PC-9 (cell line): ENCODE measurements at regions of chr7 and their contacts with region 1.

Region 1: GRCh38 chr7:135977007-135977741 is at the start of gene MTPN:
- DNase-seq: peak; percentile 96 to 99
- H3K4me3 ChIP-seq: peak within 1 kb of the TSS; percentile 97
- H3K27ac ChIP-seq: peak within 1 kb of the TSS; percentile 52
- H3K4me1 ChIP-seq: peaks cover 29% of the 10 kb centered on the region
- H3K27me3 ChIP-seq: no peaks in the 10 kb centered on the region
- CTCF ChIP-seq: no peak
- total RNA-seq, gene MTPN: 181 and 212 TPM in 2 replicates

Region 2: DNA sequence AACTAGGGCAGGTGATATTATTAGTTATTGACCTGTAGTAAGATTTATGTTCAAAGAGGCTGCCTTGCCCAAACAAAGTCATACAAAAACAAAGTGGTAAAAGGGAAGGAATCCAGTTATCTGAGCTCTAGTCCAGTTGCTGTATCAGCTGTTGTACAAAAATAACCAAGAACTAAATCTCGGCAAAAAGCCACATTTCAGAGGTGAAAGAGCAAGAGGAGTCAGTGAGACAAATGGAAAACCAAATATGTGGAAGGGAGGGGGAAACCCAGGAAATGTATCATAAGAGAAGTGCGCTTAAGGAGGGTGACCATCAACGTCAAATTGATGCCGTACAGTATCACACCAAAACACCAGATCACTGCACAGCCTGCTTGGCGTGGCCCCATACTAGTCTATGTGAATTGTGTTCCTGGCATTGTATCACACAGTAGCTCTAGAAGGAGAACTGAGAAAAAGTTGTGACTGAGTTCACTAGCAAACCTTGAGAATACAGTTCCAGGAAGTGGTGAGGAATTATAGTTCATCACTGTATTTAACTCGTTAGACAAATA is 984.5 kb before region 1 on chr7:
- CTCF ChIA-PET with region 1: no interaction called
- POLR2A ChIA-PET with region 1: no interaction called
- intact Hi-C with region 1: loop called (anchors 5 kb)
- DNase-seq: no peak
- H3K4me3 ChIP-seq: no peak overlapping the region
- H3K27ac ChIP-seq: no peak overlapping the region
- H3K4me1 ChIP-seq: peaks cover 6% of the 10 kb centered on the region
- H3K27me3 ChIP-seq: no peaks in the 10 kb centered on the region
- CTCF ChIP-seq: no peak